ENCODE measurements at regions of chr15 and their contacts with region 1.

Region 1: DNA sequence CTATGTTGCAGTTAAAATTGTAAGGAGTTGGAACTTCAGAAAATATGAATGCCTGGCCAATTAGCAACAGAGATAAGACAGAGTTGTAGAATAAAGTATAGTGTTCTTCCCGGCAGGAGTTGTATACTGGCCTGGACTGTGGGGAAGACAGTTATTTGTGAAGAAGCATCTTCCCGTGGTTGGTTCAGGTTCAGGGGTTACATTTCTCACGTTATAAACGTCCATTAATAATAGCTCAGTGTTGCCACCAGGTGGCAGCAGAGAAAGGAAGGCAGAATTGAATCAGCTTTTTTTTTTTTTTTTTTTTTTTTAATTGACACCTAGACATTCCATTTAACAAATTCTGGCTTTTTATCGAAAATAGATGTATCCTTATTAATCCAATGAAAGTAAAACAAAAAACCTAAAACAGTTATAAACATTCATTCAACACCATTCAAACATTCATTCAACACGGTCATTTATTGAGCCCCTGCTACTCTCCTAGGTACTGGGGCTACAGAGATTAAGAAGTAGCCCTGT is 66.4 kb upstream of the NR2E3 start:
- DNase-seq: peak; percentile 1 to 58 (median 48)
- ATAC-seq: no peak
- H3K4me3 ChIP-seq: no peak overlapping the region
- H3K4me3 Mint-ChIP-seq: no peak overlapping the region
- H3K27ac ChIP-seq: no peak overlapping the region
- H3K27ac Mint-ChIP-seq: no peak overlapping the region
- H3K4me1 ChIP-seq: no peaks in the 10 kb centered on the region
- H3K4me1 Mint-ChIP-seq: peaks cover 0 to 3% (median 0%) of the 10 kb centered on the region in 7 donors
- H3K27me3 ChIP-seq: no peaks in the 10 kb centered on the region
- H3K27me3 Mint-ChIP-seq: peaks cover 0 to 27% (median 7%) of the 10 kb centered on the region in 5 donors

Region 2: GRCh38 chr15:71800835-71801745 is 57.2 kb after region 1 on chr15:
- CTCF ChIA-PET with region 1: no interaction called
- POLR2A ChIA-PET with region 1: no interaction called
- intact Hi-C with region 1: loop called in 1 of 2 experiments (anchors 1 kb)
- DNase-seq: peak in 4 of 9 donors; percentile 7 to 17 (median 14)
- ATAC-seq: peak; percentile 36
- H3K4me3 ChIP-seq: no peak overlapping the region
- H3K4me3 Mint-ChIP-seq: no peak overlapping the region
- H3K27ac ChIP-seq: no peak overlapping the region
- H3K27ac Mint-ChIP-seq: peak overlapping the region in 1 of 9 donors; percentile 36
- H3K4me1 ChIP-seq: no peaks in the 10 kb centered on the region
- H3K4me1 Mint-ChIP-seq: peaks cover 0 to 3% (median 0%) of the 10 kb centered on the region in 7 donors
- H3K27me3 ChIP-seq: no peaks in the 10 kb centered on the region
- H3K27me3 Mint-ChIP-seq: peaks cover 7 to 39% (median 22%) of the 10 kb centered on the region in 5 donors